ENCODE measurements at regions of chr2 and their contacts with region 1.

Region 1: GRCh38 chr2:227238238-227239237 is 74.1 kb downstream of the COL4A3 start:
- DNase-seq: peak; percentile 32 to 56
- ATAC-seq: no peak
- H3K4me3 ChIP-seq: no peak overlapping the region
- H3K27ac ChIP-seq: no peak overlapping the region
- H3K4me1 ChIP-seq: peaks cover 0 to 13% of the 10 kb centered on the region in 2 donors
- H3K27me3 ChIP-seq: no peaks in the 10 kb centered on the region
- CTCF ChIP-seq: peak; percentile 84 to 97 (median 91)
- POLR2A ChIP-seq: no peak

Region 2: GRCh38 chr2:226862623-226863022 is 375.9 kb before region 1 on chr2:
- in situ Hi-C with region 1: no loop called
- intact Hi-C with region 1: no loop called
- DNase-seq: no peak
- ATAC-seq: no peak
- H3K4me3 ChIP-seq: no peak overlapping the region
- H3K27ac ChIP-seq: no peak overlapping the region
- H3K4me1 ChIP-seq: peaks cover 2 to 16% of the 10 kb centered on the region in 2 donors
- H3K27me3 ChIP-seq: no peaks in the 10 kb centered on the region
- CTCF ChIP-seq: no peak
- POLR2A ChIP-seq: no peak

Region 3: DNA sequence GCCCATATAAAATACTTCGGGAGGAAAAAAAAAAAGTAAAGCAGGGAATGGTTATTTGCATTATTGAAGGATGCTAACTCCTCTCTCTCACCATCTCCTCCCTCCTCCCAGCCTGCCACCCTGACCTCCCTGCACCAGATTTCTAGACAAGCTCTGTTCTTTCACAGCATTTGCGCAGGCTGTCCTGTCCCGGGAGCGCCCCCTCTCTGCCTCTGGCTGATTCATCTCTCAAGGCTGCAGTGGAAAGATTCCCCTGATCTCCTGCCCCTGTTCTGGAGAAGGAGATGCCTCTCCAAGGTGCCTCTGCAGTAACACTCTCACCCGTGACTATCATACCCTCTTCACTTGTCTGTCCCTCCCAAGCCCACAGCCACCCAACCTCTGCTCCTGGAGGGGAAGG is 113.0 kb before region 1 on chr2:
- in situ Hi-C with region 1: loop called (anchors 5 kb)
- intact Hi-C with region 1: loop called (anchors 1 kb)
- DNase-seq: no peak
- ATAC-seq: no peak
- H3K4me3 ChIP-seq: no peak overlapping the region
- H3K27ac ChIP-seq: no peak overlapping the region
- H3K4me1 ChIP-seq: peaks cover 0 to 3% of the 10 kb centered on the region in 2 donors
- H3K27me3 ChIP-seq: no peaks in the 10 kb centered on the region
- CTCF ChIP-seq: no peak
- POLR2A ChIP-seq: no peak

Region 4: GRCh38 chr2:227132986-227133385 is 105.6 kb before region 1 on chr2:
- in situ Hi-C with region 1: loop called (anchors 5 kb)
- intact Hi-C with region 1: loop called (anchors 1 kb)
- DNase-seq: peak in 1 of 2 donors; percentile 52
- ATAC-seq: peak; percentile 66 to 82
- H3K4me3 ChIP-seq: no peak overlapping the region
- H3K27ac ChIP-seq: peak overlapping the region in 3 of 4 donors; percentile 6 to 57 (median 29)
- H3K4me1 ChIP-seq: peaks cover 17 to 20% of the 10 kb centered on the region in 2 donors
- H3K27me3 ChIP-seq: no peaks in the 10 kb centered on the region
- CTCF ChIP-seq: no peak
- POLR2A ChIP-seq: no peak